Right ventricle myocardium inferior (tissue), 1 donor: ENCODE measurements at regions of chr5 and their contacts with region 1.

Region 1: GRCh38 chr5:148730943-148731861 is 76.9 kb upstream of the HTR4 start:
- DNase-seq: peak; percentile 77
- ATAC-seq: peak; percentile 92

Region 2: DNA sequence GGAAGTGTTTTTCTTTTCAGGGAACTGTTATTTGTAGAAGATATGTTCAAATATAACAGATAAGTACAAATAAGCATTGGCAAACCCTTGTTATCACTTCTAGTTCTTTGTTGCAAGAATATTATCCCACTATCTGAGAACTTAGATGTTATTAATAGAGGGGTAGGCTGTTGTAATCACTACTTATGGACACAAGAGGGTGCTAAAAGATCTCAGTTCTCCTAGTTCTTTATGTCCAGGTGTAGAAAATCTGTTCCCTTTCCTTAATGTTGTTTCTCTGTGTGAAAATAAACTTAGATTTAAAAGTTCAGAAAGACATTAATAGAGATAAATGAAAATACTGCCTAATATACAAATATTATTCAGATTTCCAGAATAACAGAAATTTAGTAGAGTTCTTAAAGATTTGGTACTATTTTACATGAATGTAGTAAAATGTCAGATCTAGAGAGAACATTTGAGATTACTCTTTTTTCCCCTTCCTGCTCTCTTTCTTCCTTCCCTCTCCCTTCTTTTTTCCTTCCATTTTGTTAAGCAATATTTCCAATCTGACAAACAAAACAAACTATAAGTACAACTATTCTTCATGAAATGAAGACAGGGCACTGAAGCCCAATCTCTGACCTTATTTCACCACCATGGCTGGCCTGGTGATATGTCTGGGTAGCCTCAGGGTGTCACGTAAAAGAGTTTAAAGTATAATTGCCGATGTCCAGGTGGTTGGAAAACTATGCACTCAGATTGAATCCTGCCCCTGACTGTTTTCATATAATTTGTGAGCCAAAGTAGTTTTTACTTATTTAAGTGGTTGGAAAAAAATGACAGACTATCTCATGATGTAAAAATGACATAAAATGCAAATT is 781.3 kb before region 1 on chr5:
- intact Hi-C with region 1: loop called (anchors 2 kb)
- DNase-seq: no peak
- ATAC-seq: no peak

Region 3: DNA sequence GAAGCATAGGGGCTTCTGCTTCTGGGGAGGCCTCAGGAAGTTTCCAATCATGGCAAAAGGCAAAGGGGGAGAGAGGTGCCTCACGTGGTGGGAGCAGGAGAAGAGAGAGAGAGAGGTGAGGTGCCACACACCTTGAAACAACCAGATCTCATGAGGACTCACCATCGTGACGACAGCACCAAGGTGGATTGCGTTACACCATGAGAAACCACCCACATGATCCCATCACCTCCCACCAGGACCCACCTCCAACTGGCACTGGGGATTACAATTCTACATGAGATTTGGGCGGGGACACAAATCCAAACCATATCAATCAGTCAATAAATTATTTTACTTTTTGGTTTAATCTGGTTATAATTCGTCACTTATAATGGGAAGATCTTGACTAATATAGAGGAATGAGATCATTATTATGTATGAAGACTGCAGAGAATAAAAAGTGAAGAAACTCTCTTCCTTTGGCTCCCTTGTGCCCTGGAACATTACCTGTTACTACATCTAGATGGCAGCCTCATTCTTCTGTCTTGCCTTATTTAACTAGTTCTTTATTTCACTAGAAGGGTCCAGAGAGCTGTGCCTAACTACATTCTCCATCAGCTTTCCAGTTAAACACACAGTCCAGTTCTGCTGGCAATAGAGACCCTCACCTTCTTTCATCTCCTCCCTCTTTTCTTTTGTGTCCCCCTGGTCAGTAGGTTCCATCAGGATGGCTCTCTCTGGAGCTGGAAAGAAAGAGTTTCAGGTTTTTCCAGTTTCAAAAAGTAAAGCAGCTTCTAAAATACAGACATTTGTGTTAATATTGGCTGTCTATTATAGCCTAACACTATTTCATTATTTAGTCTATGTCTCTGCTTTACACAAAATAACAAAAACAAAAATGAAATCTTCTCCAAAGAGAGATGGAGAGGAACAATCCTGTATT is 440.7 kb before region 1 on chr5:
- intact Hi-C with region 1: loop called (anchors 5 kb)
- DNase-seq: no peak
- ATAC-seq: no peak

Region 4: GRCh38 chr5:148542812-148543211 is 188.4 kb before region 1 on chr5:
- intact Hi-C with region 1: loop called (anchors 10 kb)
- DNase-seq: no peak
- ATAC-seq: no peak

Region 5: DNA sequence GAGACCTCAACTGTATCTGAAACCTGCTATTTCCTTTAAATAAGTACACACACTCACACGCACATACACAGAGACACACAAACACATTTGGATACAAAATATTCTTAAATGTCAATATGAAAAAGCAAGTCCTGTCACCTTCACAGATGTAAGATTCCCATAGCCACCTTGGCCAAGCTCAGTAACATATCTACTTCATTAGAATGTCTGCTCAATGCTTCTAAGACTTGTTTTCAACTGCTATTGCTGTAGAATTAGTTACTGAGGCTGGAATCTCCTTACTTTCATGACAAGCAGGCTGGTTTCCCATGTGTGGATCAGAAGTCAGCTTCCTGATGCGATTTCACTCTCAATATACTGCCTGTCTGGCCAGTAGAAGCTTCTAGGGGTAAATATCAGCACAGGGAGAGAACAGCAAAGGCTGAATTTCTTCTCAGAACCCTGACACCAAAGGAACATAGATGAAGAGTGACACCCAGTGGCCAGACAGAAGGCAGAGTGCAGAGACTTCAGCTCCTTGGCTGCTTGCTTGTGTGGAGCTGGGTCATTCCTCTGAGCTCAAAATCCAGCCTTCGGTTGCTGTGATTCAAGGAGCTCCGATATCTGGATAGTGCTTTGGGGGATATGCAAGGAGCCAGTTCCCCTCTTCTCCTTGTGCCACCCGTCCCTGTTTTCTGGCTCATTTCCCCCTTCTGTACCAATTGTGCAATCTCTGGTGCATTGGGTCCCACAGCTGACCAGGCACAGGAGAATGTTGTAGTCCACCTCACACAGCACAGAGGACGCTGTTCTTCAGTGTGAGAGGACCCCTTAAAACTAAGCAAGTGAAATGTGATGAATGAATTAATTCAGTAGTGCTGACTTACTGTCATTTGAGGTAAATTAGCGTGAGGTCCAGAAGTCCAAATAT is 383.5 kb after region 1 on chr5:
- intact Hi-C with region 1: loop called (anchors 1 kb)
- DNase-seq: no peak
- ATAC-seq: peak; percentile 92